K562 (cell line): ENCODE measurements at regions of chr19 and their contacts with region 1.

Region 1: DNA sequence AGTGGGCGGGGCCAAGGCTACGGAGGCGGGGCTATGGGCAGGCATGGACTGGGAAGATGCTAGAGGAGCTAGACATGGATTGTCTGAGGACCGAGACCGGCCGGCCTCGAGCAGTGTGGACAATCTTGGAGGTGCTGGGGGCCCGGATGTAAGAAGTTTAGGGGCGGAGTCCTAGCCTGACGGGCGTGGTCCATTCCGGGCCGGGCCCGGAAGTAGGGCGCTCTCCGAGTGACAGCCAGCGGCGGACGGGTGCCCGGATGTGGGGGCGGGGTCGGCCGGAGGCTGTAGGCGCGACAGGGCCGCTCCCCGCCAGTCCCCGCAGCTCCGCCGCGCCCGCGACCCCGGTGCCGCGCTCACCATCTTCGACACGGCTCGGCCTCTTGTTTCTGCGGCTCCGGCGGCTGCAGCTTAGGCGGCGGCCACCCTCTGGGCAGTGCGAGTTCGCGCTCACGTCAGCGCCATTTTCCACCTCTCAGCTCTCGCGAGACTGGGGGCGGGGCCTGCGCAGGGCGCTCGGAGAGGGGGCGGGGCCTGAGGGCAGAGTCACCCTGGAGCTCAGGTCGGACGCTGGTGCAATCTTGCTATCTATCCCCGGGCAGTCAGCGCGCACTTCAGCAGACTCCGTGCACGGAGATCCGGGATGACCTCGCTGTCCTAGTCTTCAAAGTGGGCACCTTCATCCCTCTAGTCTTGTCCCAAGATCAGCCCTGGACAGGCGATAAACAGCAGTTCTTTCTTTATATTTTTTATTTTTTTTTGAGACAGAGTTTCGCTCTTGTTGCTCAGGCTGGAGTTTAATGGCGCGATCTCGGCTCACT is at the start of gene ZNF414:
- DNase-seq: peak; percentile 93 to 98 (median 96)
- ATAC-seq: peak; percentile 94
- H3K4me3 ChIP-seq: peak within 1 kb of the TSS; percentile 77
- H3K27ac ChIP-seq: peak within 1 kb of the TSS; percentile 99
- H3K4me1 ChIP-seq: peaks cover 33 to 46% of the 10 kb centered on the region in 2 experiments
- H3K27me3 ChIP-seq: no peaks in the 10 kb centered on the region
- CTCF ChIP-seq: no peak; a peak in 1 of 6 replicates
- EP300 ChIP-seq: no peak
- POLR2A ChIP-seq: peak; percentile 87
- RAD21 ChIP-seq: no peak
- polyA plus RNA-seq, gene ZNF414: 0.03 TPM in 1 of 2 experiments, not detected in the other

Region 2: GRCh38 chr19:8412783-8413628 is 100.9 kb before region 1 on chr19 and contains the start of gene MARCHF2:
- CTCF ChIA-PET with region 1: no interaction called
- POLR2A ChIA-PET with region 1: interaction called, 9 read pairs
- in situ Hi-C with region 1: no loop called
- intact Hi-C with region 1: loop called (anchors 5 kb)
- DNase-seq: peak; percentile 97 to 99 (median 98)
- ATAC-seq: peak; percentile 99
- H3K4me3 ChIP-seq: peak within 1 kb of the TSS; percentile 53
- H3K27ac ChIP-seq: no peak within 1 kb of the TSS
- H3K4me1 ChIP-seq: peaks cover 22 to 39% of the 10 kb centered on the region in 2 experiments; a peak in 4 of 5 replicates
- H3K27me3 ChIP-seq: no peaks in the 10 kb centered on the region
- CTCF ChIP-seq: peak; percentile 58 to 80 (median 76)
- EP300 ChIP-seq: no peak
- POLR2A ChIP-seq: no peak
- RAD21 ChIP-seq: peak; percentile 52 to 58
- polyA plus RNA-seq, gene MARCHF2: 0.39 to 0.41 TPM

Region 3: GRCh38 chr19:8526345-8527067 is 12.6 kb after region 1 on chr19:
- CTCF ChIA-PET with region 1: no interaction called
- POLR2A ChIA-PET with region 1: interaction called, 32 read pairs
- in situ Hi-C with region 1: no loop called
- intact Hi-C with region 1: no loop called
- DNase-seq: peak; percentile 84 to 92 (median 86)
- ATAC-seq: peak; percentile 82
- H3K4me3 ChIP-seq: peak overlapping the region; percentile 78
- H3K27ac ChIP-seq: peak overlapping the region; percentile 74; the same call in 2 of the 3 replicates
- H3K4me1 ChIP-seq: peaks cover 0 to 27% of the 10 kb centered on the region in 2 experiments; a peak in 3 of 5 replicates
- H3K27me3 ChIP-seq: peaks cover 0 to 13% of the 10 kb centered on the region in 2 experiments; a peak in 2 of 5 replicates
- CTCF ChIP-seq: no peak
- EP300 ChIP-seq: no peak
- POLR2A ChIP-seq: peak; percentile 71
- RAD21 ChIP-seq: no peak